Activated CD4-positive, alpha-beta T cell treated with anti-CD3 and anti-CD28 coated beads for 36 hours (primary cell): ENCODE measurements at regions of chr1 and their contacts with region 1.

Region 1: DNA sequence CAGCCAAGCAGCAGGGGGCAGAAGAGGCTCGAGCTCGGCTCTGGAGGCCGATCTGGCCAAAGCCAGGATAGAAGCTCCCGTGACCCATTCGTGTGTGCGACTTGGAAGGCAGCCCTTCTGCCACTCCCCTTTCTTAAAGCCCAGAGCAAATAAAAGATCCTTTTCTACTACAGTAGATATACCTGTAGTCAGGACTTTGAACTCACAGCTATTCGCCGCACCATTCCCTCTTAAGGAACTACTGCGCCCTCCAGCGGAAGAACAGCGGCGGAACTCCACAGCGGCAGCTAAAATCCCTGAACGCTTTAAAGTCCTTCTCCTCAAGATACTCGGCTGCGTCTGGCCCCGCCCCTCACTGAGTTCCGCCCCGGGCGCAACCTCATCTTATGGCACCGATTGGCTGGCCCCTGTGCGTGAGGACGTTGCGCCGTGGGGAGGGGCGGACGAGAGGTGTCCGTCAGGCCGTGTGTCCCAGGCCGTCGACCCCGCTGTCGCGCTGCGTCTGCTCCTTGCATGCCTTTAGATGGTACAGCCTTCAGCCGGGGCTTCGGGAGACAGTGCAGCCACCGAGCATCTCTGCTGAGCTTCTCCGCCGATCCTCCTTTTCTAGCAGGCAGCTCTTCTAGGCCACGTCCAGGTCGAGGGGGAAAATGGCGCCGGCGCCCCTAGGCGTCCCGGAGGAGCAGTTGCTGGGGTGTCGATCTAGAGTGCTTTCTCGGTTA is at the start of gene LRIG2:
- DNase-seq: peak; percentile 99
- ATAC-seq: peak; percentile 98
- H3K4me3 Mint-ChIP-seq: peak within 1 kb of the TSS; percentile 98
- H3K27ac Mint-ChIP-seq: peak within 1 kb of the TSS; percentile 90
- H3K4me1 Mint-ChIP-seq: peaks cover 29% of the 10 kb centered on the region
- H3K27me3 Mint-ChIP-seq: no peaks in the 10 kb centered on the region
- total RNA-seq, gene LRIG2: 7.1 to 10.2 TPM

Region 2: GRCh38 chr1:112395821-112396652 is 676.9 kb before region 1 on chr1 and contains the start of gene CTTNBP2NL:
- CTCF ChIA-PET with region 1: interaction called, 5 read pairs
- POLR2A ChIA-PET with region 1: no interaction called
- intact Hi-C with region 1: loop called in 1 of 2 experiments (anchors 2 kb)
- DNase-seq: peak; percentile 90
- ATAC-seq: peak; percentile 93
- H3K4me3 Mint-ChIP-seq: peak within 1 kb of the TSS; percentile 86
- H3K27ac Mint-ChIP-seq: peak within 1 kb of the TSS; percentile 69
- H3K4me1 Mint-ChIP-seq: peaks cover 28% of the 10 kb centered on the region
- H3K27me3 Mint-ChIP-seq: peaks cover 14% of the 10 kb centered on the region
- total RNA-seq, gene CTTNBP2NL: 2.9 to 3.3 TPM

Region 3: DNA sequence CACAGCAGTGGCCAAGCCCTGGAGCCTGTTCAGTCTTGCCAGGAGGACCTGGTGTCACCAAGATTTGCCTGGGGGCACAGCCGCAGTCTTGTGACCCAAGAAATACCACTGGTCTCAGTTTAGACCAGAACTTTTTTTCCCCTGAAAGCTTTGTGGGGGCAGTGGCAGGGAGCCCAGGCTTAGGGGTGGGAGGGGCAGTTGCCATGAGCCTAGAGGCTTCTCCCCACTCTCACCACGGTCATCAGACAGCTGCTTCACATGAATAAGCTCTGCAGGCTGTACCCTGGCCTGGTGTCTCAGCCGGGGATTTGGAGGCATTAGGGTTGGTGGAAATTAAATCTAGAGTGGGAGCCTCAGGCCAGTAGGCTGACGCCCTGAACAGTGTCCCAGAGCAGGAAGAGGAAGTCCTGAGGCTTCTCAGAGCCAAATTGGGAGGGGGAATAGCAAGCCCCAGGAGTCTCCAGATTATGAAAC is 190.6 kb before region 1 on chr1:
- CTCF ChIA-PET with region 1: interaction called, 17 read pairs
- POLR2A ChIA-PET with region 1: interaction called, 3 read pairs
- intact Hi-C with region 1: loop called (anchors 2 kb)
- DNase-seq: no peak
- ATAC-seq: no peak
- H3K4me3 Mint-ChIP-seq: no peak overlapping the region
- H3K27ac Mint-ChIP-seq: no peak overlapping the region
- H3K4me1 Mint-ChIP-seq: no peaks in the 10 kb centered on the region
- H3K27me3 Mint-ChIP-seq: peaks cover 3% of the 10 kb centered on the region

Region 4: DNA sequence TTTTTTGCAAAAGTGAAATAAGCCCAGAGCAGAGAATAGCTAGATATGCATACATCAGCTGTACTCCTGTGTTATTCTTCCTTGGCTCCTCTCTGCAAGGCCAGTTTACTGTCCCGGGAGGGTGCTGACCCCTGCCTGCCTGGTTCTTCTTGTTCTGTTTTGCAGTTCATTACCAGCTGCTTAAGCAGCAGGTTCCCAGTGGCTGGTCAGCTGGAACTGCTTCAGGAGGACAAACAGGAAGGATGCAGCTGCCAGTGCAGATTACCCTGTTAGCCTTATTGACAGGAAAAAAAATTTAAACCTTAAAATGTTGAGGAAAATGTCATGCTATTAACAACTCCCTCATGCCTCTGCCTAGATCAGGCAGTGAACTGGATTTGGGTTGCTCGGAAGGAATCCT is 15.9 kb before region 1 on chr1:
- CTCF ChIA-PET with region 1: interaction called, 14 read pairs
- POLR2A ChIA-PET with region 1: interaction called, 5 read pairs
- intact Hi-C with region 1: no loop called
- DNase-seq: no peak
- ATAC-seq: no peak
- H3K4me3 Mint-ChIP-seq: no peak overlapping the region
- H3K27ac Mint-ChIP-seq: no peak overlapping the region
- H3K4me1 Mint-ChIP-seq: no peaks in the 10 kb centered on the region
- H3K27me3 Mint-ChIP-seq: no peaks in the 10 kb centered on the region

Region 5: DNA sequence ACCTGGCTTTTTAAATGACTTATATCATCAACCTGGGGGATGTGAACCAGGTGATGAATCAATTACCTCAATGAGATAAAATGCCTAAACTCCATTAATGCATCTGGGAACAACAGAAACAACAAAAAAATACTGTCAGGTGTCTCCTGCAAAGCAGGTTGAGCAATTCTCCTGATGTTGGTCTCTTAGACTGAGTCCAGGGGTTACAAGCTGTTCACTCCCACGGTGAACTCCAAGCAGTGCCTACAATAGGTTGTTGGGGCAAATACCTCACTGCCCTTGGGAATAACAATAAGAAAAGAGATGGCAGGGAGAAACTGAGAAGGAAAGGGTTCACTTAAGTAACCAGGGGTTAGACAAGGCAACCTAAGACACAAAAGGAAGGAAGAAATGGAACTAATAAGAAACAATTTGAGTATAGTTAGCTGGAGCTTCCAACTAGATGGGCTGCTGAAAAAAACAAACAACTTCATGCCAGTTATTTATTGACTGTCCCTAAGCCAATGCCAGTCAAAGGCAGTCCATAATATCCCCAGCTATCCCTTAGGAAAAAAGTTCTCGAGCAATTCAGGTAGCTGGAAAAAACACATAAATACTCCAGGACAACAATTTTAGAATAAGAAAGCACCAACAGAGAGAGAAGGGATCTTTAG is 219.8 kb after region 1 on chr1:
- CTCF ChIA-PET with region 1: no interaction called
- POLR2A ChIA-PET with region 1: no interaction called
- intact Hi-C with region 1: no loop called
- DNase-seq: no peak
- ATAC-seq: no peak
- H3K4me3 Mint-ChIP-seq: no peak overlapping the region
- H3K27ac Mint-ChIP-seq: no peak overlapping the region
- H3K4me1 Mint-ChIP-seq: no peaks in the 10 kb centered on the region
- H3K27me3 Mint-ChIP-seq: peaks cover 18% of the 10 kb centered on the region

Region 6: GRCh38 chr1:113389953-113390834 is 317.3 kb after region 1 on chr1 and contains the start of gene MAGI3:
- CTCF ChIA-PET with region 1: interaction called, 11 read pairs
- POLR2A ChIA-PET with region 1: interaction called, 5 read pairs
- intact Hi-C with region 1: loop called (anchors 2 kb)
- DNase-seq: peak; percentile 97
- ATAC-seq: peak; percentile 97
- H3K4me3 Mint-ChIP-seq: peak within 1 kb of the TSS; percentile 86
- H3K27ac Mint-ChIP-seq: peak within 1 kb of the TSS; percentile 79
- H3K4me1 Mint-ChIP-seq: peaks cover 23% of the 10 kb centered on the region
- H3K27me3 Mint-ChIP-seq: peaks cover 5% of the 10 kb centered on the region
- total RNA-seq, gene MAGI3: 6.4 to 6.7 TPM

Region 7: GRCh38 chr1:114581335-114582287 is 1508.7 kb after region 1 on chr1 and contains the start of gene BCAS2:
- CTCF ChIA-PET with region 1: no interaction called
- POLR2A ChIA-PET with region 1: no interaction called
- intact Hi-C with region 1: loop called in 1 of 2 experiments (anchors 5 kb)
- DNase-seq: peak; percentile 97
- ATAC-seq: peak; percentile 99
- H3K4me3 Mint-ChIP-seq: peak within 1 kb of the TSS; percentile 97
- H3K27ac Mint-ChIP-seq: peak within 1 kb of the TSS; percentile 98
- H3K4me1 Mint-ChIP-seq: peaks cover 29% of the 10 kb centered on the region
- H3K27me3 Mint-ChIP-seq: peaks cover 1% of the 10 kb centered on the region
- total RNA-seq, gene BCAS2: 54.1 to 54.8 TPM